ENCODE measurements at regions of chr7 and their contacts with region 1.

Region 1: DNA sequence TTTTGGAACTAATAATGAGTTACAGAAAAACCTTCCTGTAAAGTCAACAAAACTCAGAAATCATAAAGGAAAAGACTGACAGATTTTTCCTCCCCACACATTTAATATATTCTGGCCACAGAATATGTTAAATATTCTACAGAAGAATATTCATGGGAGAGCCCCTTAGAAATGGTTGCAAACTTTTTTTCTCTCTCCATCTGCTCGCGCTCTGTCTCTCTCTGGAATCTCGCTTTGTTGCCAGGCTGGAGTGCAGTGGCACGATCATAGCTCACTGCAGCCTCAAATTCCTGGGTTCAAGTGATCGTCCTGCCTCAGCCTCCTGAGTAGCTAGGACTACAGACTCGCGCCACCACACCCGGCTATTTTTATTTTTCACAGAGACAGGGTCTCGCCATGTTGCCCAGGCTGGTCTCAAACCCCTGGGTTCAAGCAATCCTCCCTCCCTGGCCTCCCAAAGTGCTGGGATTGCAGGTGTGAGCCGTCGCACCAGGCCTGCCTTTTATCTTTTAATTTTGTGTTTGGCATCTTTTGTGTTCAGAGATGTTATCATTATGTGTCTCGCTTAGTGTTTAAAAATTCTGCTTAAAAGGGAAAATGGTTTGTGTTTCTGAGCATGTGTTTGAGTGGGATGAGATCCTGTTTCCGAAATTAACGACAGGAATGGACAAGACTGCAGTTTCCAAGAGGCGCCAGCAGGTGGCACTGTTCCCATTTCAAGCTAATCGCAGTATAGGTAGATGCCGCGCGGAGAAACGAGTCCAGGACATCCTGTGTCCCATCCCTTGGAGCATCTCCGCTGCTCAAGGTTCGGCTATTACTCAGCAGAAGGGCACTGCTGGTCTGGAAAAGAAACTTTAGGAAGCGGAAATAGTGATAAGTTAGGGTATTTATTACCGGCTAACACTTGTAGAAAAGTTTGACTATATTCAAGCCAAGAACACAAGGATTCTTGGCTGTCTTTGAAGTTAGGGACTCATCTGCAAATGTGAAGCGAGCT is 23.1 kb upstream of the ST7 start:
- DNase-seq: peak; percentile 78
- H3K4me3 Mint-ChIP-seq: no peak overlapping the region
- H3K27ac Mint-ChIP-seq: no peak overlapping the region
- H3K4me1 Mint-ChIP-seq: peaks cover 2% of the 10 kb centered on the region
- H3K27me3 Mint-ChIP-seq: peaks cover 23% of the 10 kb centered on the region

Region 2: DNA sequence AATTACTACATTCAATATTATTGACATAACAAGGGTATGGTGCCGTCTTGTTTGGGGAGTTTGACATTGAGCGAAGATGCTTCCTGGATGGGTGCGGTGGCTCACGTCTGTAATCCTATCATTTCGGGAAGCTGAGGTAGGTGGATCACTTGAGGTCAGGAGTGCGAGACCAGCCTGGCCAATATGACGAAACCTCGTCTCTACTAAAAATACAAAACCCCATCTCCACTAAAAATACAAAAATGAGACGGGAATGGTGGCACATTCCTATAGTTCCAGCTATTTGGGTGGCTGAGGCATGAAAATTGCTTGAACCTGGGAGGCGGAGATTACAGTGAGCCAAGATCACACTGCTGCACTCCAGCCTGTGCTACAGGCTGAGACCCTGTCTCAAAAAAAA is 15.3 kb before region 1 on chr7:
- CTCF ChIA-PET with region 1: interaction called, 10 read pairs
- POLR2A ChIA-PET with region 1: no interaction called
- DNase-seq: no peak
- H3K4me3 Mint-ChIP-seq: no peak overlapping the region
- H3K27ac Mint-ChIP-seq: no peak overlapping the region
- H3K4me1 Mint-ChIP-seq: no peaks in the 10 kb centered on the region
- H3K27me3 Mint-ChIP-seq: no peaks in the 10 kb centered on the region

Measured in activated CD4-positive, alpha-beta T cell treated with anti-CD3 and anti-CD28 coated beads, Interleukin-2, amount 10 ng/mL, durations not matched to agents 7 days and 5 days (primary cell).